ENCODE measurements at regions of chr11 and their contacts with region 1.

Region 1: DNA sequence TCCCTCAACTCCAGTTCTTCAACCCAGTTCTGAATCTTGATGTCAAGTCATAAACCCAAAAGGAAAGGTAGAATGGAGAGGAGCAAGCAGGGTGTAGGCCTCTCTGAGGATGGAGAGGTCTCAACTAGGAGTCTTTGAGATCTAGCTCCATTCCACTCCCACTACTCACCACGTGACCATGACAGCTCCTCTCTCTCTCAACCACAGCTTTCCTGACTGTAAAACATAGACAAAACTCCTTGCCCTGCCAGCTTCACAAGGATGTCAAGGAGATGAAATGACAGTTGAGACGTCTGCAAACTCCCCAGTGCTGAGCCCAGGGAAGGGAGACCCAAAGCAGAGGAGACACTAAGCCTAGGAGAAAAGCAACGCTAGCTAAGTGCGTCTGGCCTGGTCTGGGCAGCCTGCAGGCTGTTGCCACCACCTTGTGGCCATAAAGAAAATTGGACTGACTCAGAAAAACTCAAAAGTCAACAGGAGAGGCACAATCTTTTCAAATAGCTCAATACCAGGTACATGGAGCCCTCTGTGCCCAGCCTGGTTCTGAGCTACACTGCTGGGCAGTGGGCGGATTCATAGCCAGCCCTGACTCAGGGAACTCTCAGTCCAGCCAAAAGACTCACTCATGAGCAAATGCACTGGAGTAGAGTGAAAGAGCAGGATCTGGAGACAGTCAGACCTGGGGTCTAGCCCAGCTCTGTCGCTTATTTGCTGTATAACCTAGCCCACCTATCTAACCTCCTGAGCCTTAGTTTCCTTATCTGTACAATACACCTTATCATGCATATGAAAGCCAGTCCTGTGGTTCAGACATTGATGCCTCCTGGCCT is 3.4 kb downstream of the CLPB start:
- DNase-seq: peak; percentile 71

Region 2: DNA sequence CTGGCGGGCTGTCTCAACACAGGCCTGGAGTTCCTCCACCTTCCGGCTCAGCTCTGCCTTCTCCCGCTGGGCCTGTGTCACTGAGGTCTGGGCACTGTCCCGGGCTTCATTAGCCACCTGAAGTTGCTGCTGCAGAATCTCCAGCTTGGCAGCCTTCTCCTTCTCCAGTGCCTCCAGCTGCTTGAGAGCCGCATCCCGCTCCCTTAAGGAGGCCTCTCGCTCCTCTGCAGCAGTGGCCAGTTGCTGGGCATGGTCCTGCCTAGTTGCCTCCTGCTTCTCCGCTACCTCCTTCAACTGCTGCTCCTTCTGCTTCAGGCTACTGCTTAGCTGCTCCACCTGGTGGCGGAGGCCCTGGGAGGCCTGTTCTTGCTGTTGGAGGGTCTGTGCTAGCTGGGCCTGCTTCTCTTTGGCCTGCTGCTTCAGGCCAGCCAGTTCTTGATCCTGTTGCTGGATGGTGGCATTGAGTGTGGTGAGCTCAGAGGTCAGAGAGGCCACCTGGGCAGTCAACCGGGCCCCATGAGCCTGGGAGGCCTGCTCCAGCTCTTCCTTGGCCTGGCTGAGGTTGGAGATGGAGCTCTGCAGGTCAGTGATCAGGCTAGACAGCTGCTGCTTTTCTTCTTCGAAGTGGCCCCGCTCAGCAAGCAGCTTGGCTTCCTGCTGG is 415.3 kb before region 1 on chr11:
- in situ Hi-C with region 1: loop called (anchors 25 kb)
- DNase-seq: peak; percentile 51

Region 3: DNA sequence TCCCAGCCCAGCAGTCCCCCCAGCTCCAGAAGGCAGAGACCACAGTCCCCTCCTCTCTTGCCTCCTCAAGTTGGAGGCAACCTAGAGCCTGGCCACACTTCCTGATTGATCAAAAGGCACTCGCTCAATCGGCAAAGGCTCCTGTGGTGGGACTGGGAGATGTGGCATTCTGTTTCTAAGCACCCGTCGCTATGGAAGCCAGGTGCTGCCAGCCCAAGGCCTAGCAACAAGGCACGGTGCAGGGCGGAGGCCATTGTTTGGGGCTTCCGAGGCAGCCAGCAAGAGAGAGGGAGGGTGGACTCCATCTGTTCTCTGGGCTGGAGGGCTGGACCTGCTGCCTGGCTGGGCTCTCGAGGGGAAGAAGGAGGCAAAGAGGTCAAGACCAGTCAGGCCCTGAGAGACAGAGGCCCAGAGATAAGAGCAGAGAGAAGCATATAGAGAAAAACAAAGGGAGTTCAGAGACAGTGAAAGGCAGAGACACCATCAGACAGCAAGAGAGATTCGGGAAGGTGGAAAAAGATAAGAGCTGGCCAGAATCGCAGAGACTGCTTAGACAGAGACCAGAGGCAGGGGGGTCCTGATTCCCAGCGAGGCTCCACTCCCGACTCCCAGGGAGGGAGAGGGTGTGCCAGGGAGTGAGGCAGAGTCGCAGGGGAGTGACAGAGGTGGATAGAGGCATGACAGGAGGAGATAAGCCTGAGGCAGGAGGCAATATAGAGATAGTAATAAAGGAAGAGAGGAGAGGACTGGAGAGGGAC is 222.1 kb after region 1 on chr11:
- in situ Hi-C with region 1: no loop called
- DNase-seq: no peak